ENCODE measurements at regions of chr14 and their contacts with region 1.

Region 1: DNA sequence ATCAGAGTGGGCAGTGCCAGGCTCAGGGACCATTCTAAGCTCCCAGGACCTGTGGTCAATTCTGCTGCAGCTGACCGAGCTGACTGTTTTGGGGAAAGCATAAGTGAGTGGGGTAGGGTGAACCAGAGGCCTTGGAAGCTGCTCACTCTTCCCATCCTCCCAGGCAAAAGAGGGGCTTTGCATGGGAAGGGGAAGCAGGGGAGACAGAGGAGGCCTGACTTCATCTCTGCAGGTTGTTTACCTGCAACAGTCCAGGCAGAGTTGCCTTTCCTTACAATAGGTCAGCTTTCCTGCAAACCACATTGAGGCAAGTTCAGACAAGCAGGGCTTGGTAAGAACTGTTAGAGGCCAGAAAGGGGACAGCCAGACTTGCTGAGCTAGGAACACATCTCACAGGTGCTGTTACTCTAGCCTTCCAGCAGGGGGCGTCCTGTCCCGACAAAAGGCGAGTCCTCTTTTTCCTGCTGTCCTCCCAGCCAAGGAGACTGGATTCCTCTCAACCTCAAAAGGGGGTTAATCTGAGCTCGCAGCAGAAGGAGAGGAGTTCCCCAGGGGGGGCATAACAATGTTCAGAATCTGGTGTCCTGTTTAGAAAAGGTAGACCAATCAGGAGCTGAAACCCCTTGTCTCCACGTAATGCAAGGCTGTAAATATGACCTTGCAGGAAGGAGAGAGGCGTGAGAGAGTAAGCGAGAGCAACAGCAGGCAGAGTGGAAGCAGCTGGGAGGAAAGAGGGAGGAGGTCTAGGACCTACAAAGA is 4.3 kb upstream of the DHRS2 start:
- DNase-seq: peak; percentile 82
- CTCF ChIP-seq: peak; percentile 90

Region 2: DNA sequence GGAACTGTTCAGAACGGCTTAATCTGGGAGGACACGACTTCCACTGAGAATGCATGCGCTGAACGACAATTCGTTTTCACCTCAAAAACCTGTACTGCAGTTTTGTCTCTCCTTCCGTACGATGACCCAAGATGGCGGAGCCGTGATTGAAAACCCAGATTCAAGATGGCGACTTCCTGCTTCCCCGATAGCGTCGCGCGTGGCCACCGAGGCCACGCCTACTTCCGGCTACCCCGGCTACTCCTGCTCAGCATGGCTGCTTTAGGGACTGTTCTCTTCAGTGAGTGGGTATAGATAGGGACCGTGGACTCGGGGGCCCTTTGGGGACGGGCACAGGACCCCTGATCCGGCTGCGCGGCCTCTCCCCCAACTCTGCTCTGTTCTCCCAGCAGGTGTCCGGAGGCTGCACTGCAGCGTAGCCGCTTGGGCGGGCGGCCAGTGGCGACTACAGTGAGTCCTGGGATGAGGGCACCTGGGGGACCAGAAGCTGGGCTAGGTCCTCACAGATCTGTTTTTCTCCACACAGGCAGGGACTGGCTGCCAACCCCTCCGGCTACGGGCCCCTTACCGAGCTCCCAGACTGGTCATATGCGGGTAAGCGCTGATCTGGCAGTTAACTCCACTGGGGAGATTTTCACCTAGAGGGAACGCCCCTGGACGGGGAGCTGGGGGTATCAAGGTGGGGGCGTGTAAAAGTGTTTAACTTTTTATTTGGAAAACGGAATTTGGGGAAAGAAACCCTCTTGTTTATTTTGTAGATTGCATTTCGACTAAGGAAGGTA is 802.0 kb before region 1 on chr14 and contains the start of gene MRPL52:
- CTCF ChIA-PET with region 1: no interaction called
- POLR2A ChIA-PET with region 1: no interaction called
- DNase-seq: peak; percentile 93
- CTCF ChIP-seq: no peak

Region 3: GRCh38 chr14:23588884-23589598 is 42.8 kb before region 1 on chr14:
- CTCF ChIA-PET with region 1: interaction called, 65 read pairs
- POLR2A ChIA-PET with region 1: no interaction called
- DNase-seq: peak; percentile 89
- CTCF ChIP-seq: peak; percentile 86

Region 4: GRCh38 chr14:23621204-23621931 is 10.5 kb before region 1 on chr14:
- CTCF ChIA-PET with region 1: interaction called, 119 read pairs
- POLR2A ChIA-PET with region 1: no interaction called
- DNase-seq: no peak
- CTCF ChIP-seq: no peak

Region 5: DNA sequence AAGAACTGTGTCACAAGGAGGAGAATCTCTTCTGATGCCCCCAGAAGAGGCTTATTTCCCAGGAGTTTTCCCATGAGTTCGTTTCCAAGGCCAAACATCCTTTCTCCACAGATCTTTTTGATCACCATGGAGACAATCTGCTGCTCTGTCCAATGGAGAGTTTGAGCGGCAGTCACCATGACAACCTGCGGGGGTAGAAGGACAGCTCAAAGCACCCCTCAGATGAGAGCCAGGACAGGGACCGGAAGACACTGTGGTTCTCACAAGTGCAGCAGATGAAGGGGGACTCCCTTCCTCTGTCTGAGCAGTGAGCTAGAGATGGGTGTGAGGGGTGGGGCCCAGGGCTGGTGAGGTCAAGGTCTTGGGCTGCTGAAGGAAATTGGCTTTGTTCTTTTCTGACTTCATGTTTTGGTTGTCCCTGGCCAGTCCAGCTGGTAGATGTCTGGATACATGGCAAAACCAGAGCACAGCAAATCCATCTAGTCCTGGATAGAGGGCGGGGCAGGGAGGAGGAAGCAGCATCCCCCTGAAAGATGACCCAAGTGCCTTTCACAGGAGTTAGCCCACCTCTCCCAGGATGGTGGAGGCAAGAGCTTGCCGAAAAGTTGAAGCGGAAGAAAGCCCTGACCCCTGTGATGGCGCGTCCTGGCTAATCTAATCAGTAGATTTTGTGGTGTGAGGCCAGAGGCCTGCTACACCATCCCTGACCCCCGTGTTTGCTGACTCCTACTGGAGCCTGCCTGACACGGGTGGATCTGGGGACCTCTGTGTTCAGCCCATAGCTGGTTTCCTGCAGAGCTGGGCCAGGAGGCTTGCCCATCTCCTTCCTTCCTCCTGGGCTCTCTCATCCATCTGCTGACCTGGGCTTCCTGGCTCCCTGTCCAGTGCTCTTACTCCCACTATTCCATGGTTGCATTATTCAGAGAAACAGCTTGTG is 28.7 kb after region 1 on chr14:
- CTCF ChIA-PET with region 1: interaction called, 57 read pairs
- POLR2A ChIA-PET with region 1: no interaction called
- DNase-seq: peak; percentile 60
- CTCF ChIP-seq: no peak

Region 6: GRCh38 chr14:23881282-23881681 is 249.4 kb after region 1 on chr14:
- CTCF ChIA-PET with region 1: interaction called, 10 read pairs
- POLR2A ChIA-PET with region 1: no interaction called
- DNase-seq: no peak
- CTCF ChIP-seq: no peak

Region 7: GRCh38 chr14:23910101-23910875 is 278.4 kb after region 1 on chr14:
- CTCF ChIA-PET with region 1: interaction called, 84 read pairs
- POLR2A ChIA-PET with region 1: no interaction called
- DNase-seq: peak; percentile 50
- CTCF ChIP-seq: peak; percentile 72

Region 8: DNA sequence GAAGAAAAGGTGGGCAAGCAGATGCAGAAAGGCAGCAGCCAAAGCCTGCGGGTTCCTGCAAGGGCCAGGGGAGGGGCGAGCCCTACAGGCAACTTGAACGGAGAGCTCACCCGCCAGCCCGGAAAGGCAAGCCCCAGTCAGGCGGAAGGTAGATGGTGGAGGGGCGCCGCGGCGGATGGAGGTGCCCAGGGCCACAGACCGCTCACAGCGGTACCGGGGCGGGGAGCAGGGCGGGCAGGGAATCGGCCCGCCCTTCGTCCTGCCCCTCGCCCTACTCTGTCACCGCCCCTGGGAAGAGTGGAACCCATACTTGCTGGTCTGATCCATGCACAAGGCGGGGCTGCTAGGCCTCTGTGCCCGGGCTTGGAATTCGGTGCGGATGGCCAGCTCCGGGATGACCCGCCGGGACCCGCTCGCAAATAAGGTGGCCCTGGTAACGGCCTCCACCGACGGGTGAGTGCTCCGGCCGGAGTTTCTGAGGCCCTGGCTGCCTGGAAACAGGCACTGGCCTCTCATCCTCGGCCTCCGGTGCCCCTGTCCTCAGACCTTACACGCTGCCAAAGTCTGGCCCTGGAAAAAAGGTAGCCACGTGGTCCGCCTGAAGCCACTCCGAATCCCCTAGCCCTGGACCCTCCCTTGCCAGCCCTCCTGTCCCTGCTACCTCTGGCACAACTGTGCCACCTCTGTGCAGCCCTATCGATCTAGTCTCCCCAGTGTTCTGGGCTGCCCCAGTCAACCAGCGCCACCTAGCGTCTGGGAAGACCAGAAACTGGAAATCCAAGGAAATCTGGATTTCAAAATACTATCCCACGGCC is 321.8 kb after region 1 on chr14 and contains the start of gene DHRS4:
- CTCF ChIA-PET with region 1: interaction called, 28 read pairs
- POLR2A ChIA-PET with region 1: no interaction called
- DNase-seq: peak; percentile 86
- CTCF ChIP-seq: peak; percentile 91

Measured in GM10248 (cell line).